MCF 10A (cell line): ENCODE measurements at regions of chr2 and their contacts with region 1.

Region 1: DNA sequence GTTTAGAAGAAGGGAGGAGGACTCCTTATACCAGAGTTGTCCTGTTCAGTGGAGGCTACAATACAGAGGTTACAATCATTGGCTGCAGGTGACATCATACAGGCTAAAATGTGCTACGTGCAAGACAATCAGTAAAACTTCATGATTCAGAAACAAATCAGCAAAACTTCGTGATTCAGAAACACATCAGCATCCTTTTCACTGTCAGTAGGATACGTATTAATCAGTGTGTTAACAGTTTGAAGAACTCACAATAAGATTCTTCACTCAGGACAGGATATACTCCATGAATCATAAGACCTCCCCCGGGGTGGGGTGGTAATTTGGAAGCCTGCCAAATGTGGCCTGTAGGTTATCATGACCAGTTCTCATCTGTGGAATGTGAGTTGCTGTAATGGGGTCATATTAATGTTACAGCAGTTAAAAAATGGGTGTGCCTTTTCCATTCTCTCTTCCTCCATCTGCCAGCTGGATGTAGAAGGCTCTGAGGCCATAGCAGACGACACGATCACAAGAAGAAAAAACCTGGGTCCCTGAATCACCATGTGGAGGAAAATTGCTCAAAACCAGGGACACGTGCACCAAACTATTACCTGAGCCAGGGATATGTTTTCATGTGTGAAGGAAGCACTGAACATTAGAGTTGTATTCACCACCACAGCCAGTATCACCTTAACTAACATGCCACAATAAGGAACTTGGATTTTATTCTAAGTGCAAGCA is 134.8 kb upstream of the CREB1 start:
- DNase-seq: peak; percentile 97
- H3K4me3 Mint-ChIP-seq: no peak overlapping the region
- H3K27ac Mint-ChIP-seq: peak overlapping the region; percentile 85
- H3K4me1 Mint-ChIP-seq: peaks cover 27% of the 10 kb centered on the region
- H3K27me3 Mint-ChIP-seq: no peaks in the 10 kb centered on the region
- CTCF ChIP-seq: no peak

Region 2: DNA sequence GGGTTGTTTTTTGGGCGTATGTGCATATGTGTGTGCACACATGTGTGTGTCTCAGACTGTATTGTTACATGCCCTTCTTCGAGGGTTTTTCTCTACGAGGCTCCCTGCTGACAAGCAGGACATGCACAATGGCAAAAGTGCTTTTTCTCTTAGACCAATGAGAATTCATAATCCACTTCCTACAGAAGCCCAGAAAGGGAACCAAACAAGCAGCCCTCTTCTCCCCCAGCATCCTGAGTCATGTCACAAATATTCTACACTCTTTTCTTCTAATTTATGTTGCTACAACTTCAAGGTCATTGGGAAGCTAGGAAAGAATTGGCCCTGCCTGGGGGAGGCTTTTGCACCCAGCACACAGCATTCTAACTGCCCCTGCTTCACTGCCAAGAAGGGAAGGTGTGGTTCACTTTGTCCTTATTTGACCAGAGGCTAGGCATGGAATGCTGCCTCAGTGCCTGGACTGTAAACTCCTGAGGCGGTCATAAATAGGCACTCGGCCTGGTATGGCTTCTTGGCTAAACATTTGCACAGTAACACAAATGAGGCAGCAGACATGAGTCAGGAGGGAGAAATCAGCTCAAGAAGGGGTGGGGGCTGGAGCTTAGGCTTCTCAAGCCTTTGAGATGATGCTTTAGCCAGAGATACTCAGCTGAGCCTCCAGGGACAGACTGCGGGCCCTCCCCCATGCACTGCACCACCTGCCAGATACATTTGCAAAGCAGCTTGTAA is 136.5 kb before region 1 on chr2:
- CTCF ChIA-PET with region 1: no interaction called
- POLR2A ChIA-PET with region 1: interaction called, 3 read pairs
- intact Hi-C with region 1: loop called (anchors 1 kb)
- DNase-seq: peak; percentile 91
- H3K4me3 Mint-ChIP-seq: peak overlapping the region; percentile 26
- H3K27ac Mint-ChIP-seq: peak overlapping the region; percentile 84
- H3K4me1 Mint-ChIP-seq: peaks cover 65% of the 10 kb centered on the region
- H3K27me3 Mint-ChIP-seq: no peaks in the 10 kb centered on the region
- CTCF ChIP-seq: no peak

Region 3: GRCh38 chr2:207311316-207312005 is 83.5 kb before region 1 on chr2:
- CTCF ChIA-PET with region 1: no interaction called
- POLR2A ChIA-PET with region 1: no interaction called
- intact Hi-C with region 1: loop called (anchors 2 kb)
- DNase-seq: peak; percentile 97
- H3K4me3 Mint-ChIP-seq: no peak overlapping the region
- H3K27ac Mint-ChIP-seq: peak overlapping the region; percentile 74
- H3K4me1 Mint-ChIP-seq: peaks cover 27% of the 10 kb centered on the region
- H3K27me3 Mint-ChIP-seq: no peaks in the 10 kb centered on the region
- CTCF ChIP-seq: peak; percentile 23

Region 4: DNA sequence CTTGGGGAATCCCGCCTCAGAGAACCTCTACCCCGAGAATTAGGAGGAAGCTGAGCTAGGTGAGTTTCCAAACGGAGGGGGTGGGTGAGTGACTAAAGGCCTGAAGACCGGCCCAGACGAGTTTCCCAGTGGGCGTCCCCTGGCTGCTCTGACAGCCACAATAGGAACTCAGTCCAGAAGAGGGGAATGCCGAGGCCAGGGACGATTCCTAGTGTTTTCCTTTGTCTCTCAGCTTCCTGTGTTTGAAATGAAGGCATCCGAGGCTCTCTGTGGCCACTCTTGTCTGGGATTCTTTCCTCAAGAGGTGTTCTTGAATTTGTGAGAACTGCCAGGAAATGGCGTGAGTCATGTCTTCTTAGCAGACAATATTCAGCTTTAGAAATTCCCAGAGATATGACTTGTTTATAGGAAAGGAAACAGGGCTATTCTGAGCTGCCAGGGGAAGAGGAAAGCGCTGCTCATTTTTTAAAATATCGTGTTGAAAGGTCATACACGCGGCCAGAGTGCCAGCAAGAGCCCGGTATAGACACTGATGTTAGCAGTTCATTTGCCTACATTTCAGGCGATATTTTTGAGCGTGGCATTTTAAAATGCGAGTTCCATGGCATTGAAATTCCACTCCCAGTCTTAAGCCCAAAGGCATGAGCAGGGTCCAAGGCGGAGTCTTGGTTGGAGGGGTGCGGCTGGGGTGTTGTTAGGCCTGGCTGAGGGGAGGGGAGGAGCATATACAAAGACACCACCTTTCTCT is 60.2 kb before region 1 on chr2:
- CTCF ChIA-PET with region 1: no interaction called
- POLR2A ChIA-PET with region 1: interaction called, 3 read pairs
- intact Hi-C with region 1: loop called (anchors 1 kb)
- DNase-seq: peak; percentile 97
- H3K4me3 Mint-ChIP-seq: peak overlapping the region; percentile 70
- H3K27ac Mint-ChIP-seq: peak overlapping the region; percentile 98
- H3K4me1 Mint-ChIP-seq: peaks cover 58% of the 10 kb centered on the region
- H3K27me3 Mint-ChIP-seq: no peaks in the 10 kb centered on the region
- CTCF ChIP-seq: no peak

Region 5: GRCh38 chr2:207408086-207408794 is 13.3 kb after region 1 on chr2:
- CTCF ChIA-PET with region 1: no interaction called
- POLR2A ChIA-PET with region 1: interaction called, 10 read pairs
- intact Hi-C with region 1: no loop called
- DNase-seq: peak; percentile 95
- H3K4me3 Mint-ChIP-seq: no peak overlapping the region
- H3K27ac Mint-ChIP-seq: no peak overlapping the region
- H3K4me1 Mint-ChIP-seq: peaks cover 21% of the 10 kb centered on the region
- H3K27me3 Mint-ChIP-seq: no peaks in the 10 kb centered on the region
- CTCF ChIP-seq: no peak